ENCODE measurements at regions of chr2 and their contacts with region 1.

Region 1: DNA sequence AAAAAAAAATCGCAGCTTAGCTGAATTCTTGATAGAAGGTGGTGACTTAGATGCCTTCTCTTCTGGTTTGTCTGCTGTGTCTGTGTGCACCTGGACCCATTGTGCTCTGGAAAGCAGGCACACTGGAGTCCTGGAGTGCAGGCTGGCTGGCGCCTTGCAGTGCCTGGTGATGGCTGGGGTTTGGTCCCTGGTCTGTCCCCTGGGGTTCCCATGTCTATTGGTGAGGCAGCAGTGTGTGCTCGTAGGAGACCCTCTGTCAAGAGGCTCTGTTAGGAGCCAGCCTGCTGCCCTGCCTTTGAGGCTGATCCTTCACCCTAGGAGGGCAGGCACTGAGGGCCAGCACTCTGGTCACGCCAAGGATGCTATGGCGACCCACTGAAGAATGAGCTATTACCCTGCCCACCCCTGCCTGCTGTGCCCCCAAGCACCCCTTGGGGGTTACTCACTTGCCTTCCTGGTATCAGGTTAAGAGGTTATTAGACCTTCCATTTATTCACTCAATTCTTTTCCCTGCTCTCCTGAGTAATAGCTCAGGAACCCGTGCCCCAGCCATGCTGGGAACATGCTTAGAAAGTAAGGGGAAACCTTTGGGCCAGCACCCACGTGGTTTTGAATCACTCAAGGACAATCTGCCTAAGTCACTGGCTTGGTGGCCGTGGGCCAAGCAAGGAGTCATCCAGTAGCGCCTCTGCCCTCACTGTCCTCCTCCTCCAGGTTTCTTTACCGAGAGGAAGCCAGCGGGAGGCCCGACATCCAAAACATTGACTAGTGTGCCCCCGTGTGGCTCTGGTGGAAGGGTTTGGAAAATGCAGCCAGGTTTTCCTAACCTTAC is 284.5 kb downstream of the PRKCE start:
- DNase-seq: peak; percentile 88 to 95 (median 90)
- ATAC-seq: peak; percentile 88 to 93 (median 92)
- H3K4me3 ChIP-seq: no peak overlapping the region
- H3K27ac ChIP-seq: peak overlapping the region in 2 of 4 donors; percentile 16 to 37
- H3K4me1 ChIP-seq: peaks cover 0 to 8% (median 5%) of the 10 kb centered on the region in 3 donors
- H3K27me3 ChIP-seq: no peaks in the 10 kb centered on the region
- CTCF ChIP-seq: peak; percentile 35 to 62 (median 53)

Region 2: GRCh38 chr2:45220227-45220626 is 715.8 kb before region 1 on chr2:
- intact Hi-C with region 1: no loop called
- DNase-seq: no peak
- ATAC-seq: no peak
- H3K4me3 ChIP-seq: no peak overlapping the region
- H3K27ac ChIP-seq: no peak overlapping the region
- H3K4me1 ChIP-seq: no peaks in the 10 kb centered on the region
- H3K27me3 ChIP-seq: no peaks in the 10 kb centered on the region
- CTCF ChIP-seq: no peak

Region 3: DNA sequence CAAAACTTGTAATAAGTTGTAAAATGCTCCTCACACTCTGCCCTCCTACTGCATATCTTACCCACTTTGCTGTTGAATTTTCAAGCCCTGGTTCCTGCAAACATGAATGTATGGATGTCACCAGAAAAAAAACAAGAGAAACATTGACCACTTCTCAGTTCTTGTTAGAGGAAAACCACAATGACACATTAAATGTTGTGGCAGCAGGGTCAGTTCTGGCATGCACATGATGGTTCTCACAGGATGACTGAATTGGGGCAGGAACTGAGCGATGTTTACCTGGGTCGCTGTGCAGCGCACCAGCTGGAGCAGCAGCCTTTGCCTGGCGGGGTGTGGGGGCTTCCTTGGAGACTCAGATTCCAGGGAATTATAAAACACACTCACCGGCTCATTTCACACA is 298.6 kb before region 1 on chr2:
- intact Hi-C with region 1: loop called in 2 of 3 experiments (anchors 5 to 10 kb)
- DNase-seq: peak in 2 of 6 donors; percentile 18 to 33
- ATAC-seq: peak; percentile 30 to 64 (median 46)
- H3K4me3 ChIP-seq: no peak overlapping the region
- H3K27ac ChIP-seq: no peak overlapping the region
- H3K4me1 ChIP-seq: no peaks in the 10 kb centered on the region
- H3K27me3 ChIP-seq: no peaks in the 10 kb centered on the region
- CTCF ChIP-seq: no peak

Region 4: DNA sequence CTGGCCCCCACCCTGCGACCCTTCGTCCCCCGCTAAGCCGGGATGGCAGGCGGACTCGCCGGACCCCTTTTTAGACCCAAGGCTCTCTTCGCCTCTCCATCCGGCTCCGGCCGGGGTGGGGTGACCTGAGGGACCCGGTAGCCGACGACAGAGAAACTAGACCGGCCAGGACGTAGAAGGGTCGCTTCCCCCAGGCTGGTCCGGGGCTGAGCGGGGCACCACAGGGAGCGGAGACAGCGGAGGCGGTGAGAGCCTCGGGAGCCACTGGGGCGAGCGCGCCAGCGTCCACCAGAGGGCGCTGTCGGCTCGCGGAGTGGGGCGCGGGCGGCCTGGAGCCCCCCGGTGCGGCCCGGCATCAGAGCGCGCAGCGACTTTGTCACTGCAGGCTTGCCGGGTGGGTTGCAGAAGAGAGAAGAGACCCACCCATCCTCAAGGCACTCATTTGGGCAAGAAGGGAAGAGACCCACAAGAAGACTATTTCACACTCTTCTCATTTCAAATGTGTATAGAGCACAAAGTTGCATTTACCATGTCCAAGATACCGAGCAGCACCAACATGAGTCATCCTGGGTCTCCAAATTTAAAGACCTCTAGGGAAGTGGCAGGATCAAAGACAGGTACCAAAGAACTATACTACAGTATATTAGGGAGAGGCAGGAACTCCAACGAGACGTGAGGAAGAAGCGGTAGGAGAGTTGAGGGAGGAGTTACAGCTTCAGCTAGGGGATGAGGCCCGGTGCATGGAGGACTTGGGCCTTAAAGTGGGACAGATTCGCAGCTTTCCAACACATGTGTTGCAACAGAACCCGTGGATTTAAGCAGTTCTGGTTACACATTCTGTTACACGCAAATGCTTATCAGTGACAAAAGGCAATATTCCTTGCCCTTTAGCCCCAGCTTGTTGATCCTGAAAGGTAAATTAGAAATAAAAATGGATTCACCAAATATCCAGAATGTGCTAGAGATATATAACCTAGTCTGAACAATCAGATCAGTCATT is 292.2 kb before region 1 on chr2:
- intact Hi-C with region 1: loop called (anchors 5 to 10 kb)
- DNase-seq: peak; percentile 46 to 95 (median 78)
- ATAC-seq: peak; percentile 98 to 99 (median 99)
- H3K4me3 ChIP-seq: peak overlapping the region; percentile 10 to 68 (median 28)
- H3K27ac ChIP-seq: no peak overlapping the region
- H3K4me1 ChIP-seq: peaks cover 0 to 3% (median 0%) of the 10 kb centered on the region in 3 donors
- H3K27me3 ChIP-seq: no peaks in the 10 kb centered on the region
- CTCF ChIP-seq: peak; percentile 94 to 99 (median 96)

Region 5: DNA sequence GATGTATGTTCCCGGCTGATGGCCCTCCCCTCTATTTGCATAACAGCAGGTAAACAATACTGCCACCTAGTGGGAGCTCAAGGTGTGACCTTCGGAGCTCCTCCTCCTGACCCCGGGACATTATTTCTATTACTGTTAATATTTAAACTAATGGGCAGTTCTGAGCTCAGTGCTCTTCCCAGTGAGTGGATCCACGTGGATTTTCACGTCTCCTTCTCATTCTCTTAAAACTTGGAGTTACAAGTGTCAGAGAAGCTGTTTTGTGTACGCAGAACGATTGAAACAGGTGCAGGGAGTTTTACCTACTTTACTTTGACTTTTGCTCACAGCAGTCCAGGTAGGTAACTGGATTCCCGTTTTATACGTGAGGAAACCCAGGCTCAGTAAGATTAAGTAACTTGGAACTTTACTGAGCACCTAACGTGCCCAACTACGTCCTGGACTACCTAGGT is 157.3 kb before region 1 on chr2:
- intact Hi-C with region 1: loop called in 1 of 3 experiments (anchors 10 kb)
- DNase-seq: peak in 4 of 6 donors; percentile 73 to 84 (median 75)
- ATAC-seq: peak; percentile 89 to 98 (median 94)
- H3K4me3 ChIP-seq: peak overlapping the region in 2 of 4 donors; percentile 12 to 17
- H3K27ac ChIP-seq: peak overlapping the region in 1 of 4 donors; percentile 12
- H3K4me1 ChIP-seq: peaks cover 0 to 6% (median 0%) of the 10 kb centered on the region in 3 donors
- H3K27me3 ChIP-seq: no peaks in the 10 kb centered on the region
- CTCF ChIP-seq: peak; percentile 54 to 75 (median 67)

Region 6: DNA sequence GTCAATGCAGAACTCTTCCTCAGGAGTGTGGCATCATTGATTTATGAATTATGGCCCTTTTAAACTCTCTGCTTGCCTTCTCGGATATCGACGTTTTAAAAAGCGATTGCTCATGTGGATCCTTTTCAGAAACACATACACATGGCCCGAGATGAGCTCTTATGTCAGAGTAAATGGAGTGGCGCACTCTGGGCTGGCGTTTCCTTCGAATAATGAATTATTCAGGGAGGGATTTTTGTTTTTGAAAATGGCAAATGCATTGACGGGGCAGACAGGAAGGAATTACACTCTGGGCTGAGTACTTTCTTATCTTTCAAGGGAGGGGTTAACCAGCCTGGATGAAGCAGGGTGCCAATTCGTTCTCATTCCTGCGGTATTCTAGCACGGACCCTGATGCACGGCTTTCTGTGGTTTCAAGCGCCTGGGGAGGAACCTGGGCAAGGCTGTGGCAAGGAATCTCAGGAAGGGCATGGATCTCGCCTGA is 141.8 kb before region 1 on chr2:
- intact Hi-C with region 1: loop called in 1 of 3 experiments (anchors 10 kb)
- DNase-seq: no peak
- ATAC-seq: peak in 1 of 4 donors; percentile 7
- H3K4me3 ChIP-seq: no peak overlapping the region
- H3K27ac ChIP-seq: peak overlapping the region in 2 of 4 donors; percentile 24 to 52
- H3K4me1 ChIP-seq: peaks cover 9 to 17% (median 16%) of the 10 kb centered on the region in 3 donors
- H3K27me3 ChIP-seq: no peaks in the 10 kb centered on the region
- CTCF ChIP-seq: no peak